HEK293 (cell line): ENCODE measurements at regions of chr11 and their contacts with region 1.

Region 1: DNA sequence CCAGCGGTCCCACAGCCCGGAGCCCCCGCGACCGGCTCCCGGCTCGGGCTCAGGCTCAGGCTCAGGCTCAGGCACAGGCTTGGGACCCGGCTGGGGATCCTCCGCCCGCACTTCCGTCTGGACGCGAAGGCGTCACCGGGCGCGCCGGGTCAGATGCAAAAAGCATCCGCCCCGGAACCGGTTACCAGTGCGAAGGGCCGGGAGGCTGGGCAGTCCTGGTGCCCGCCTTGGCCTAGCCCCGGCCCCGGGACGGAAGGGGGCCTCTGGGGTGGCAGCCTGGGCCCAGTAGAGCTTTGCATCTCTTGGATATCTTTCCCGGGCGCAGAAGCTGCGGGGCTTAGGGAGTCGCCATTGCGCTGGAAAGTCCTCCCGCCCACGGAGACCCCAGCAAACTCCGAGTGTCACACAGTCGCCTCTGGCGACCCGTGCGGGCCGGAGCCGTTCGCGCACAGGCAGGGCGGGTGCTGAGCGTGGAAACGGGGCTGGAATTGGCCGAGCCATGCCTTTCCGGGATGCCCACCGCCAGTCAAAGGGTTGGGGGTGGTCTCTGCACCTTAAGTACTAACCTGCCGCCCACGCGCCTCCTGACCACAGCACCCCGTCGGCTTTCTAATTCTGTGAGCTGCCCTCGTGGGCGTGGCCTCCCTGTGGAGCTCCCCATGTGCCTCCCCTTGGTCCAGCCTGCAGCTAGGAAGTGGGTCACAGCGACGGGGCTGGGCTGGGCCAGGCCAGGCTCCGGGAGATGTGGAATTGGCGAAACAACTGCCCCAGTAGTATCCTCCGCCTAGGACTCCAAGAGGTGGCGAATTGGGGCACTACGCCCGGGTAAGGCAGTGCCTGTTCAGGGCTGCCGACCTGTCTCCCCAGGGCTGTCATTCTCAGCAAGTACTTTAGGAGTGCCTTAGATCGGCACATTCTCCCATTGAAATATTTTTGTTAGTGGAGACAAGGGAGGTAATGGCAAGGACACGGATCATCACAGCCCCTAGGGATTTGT is at the start of gene TMEM9B:
- H3K4me3 ChIP-seq: peak within 1 kb of the TSS; percentile 89
- H3K27ac ChIP-seq: peak within 1 kb of the TSS; percentile 77
- H3K4me1 ChIP-seq: no peaks in the 10 kb centered on the region
- CTCF ChIP-seq: no peak

Region 2: GRCh38 chr11:8911029-8911826 is 53.4 kb before region 1 on chr11 and contains the start of gene AKIP1:
- CTCF ChIA-PET with region 1: interaction called, 96 read pairs
- POLR2A ChIA-PET with region 1: interaction called, 12 read pairs
- H3K4me3 ChIP-seq: peak within 1 kb of the TSS; percentile 85
- H3K27ac ChIP-seq: peak within 1 kb of the TSS; percentile 86
- H3K4me1 ChIP-seq: no peaks in the 10 kb centered on the region
- CTCF ChIP-seq: peak; percentile 7; the same call in 1 of the 2 replicates

Region 3: GRCh38 chr11:8922691-8923090 is 41.9 kb before region 1 on chr11:
- CTCF ChIA-PET with region 1: interaction called, 21 read pairs
- POLR2A ChIA-PET with region 1: no interaction called
- H3K4me3 ChIP-seq: no peak overlapping the region
- H3K27ac ChIP-seq: no peak overlapping the region
- H3K4me1 ChIP-seq: no peaks in the 10 kb centered on the region
- CTCF ChIP-seq: no peak

Region 4: DNA sequence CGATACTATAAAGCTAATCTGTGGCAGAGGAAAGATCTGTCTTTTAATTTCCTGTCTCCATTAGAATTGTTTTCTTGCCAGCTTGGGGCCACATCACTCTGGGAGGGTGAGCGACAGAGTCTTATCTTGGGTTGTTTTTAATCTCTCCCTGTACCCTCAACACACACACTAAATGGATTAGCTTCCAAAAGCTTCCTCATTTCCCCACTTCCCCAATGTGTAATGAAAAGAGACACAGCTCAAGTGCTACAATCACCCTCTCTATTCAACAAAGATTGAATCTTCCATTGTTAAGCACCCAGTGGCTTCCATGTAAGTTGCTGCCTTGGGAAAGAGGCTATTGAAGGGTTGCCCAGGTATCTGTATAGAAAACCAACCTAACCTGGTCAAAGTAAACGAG is 15.7 kb before region 1 on chr11:
- CTCF ChIA-PET with region 1: interaction called, 15 read pairs
- POLR2A ChIA-PET with region 1: interaction called, 3 read pairs
- H3K4me3 ChIP-seq: no peak overlapping the region
- H3K27ac ChIP-seq: no peak overlapping the region
- H3K4me1 ChIP-seq: no peaks in the 10 kb centered on the region
- CTCF ChIP-seq: no peak

Region 5: DNA sequence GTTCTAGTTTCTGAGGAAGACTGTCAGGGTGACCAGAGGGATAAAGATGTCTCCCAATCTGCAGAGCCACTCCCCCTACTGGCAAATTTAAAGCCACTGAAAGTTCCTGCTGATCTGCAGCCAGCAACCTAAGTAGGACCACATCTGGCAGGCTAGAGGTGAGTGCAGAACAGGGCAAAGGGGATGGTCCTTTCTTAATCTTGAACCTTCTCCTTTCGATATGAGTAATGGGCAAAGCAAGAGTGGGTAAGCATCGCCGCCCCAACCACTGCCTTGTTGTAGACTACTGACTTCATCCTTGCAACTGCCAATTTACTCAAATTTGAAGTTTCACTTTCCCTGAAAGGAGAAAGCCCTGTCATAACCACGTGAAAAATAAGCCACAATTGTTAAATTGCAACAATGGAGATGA is 96.1 kb after region 1 on chr11:
- CTCF ChIA-PET with region 1: no interaction called
- POLR2A ChIA-PET with region 1: no interaction called
- H3K4me3 ChIP-seq: no peak overlapping the region
- H3K27ac ChIP-seq: no peak overlapping the region
- H3K4me1 ChIP-seq: no peaks in the 10 kb centered on the region
- CTCF ChIP-seq: no peak

Region 6: DNA sequence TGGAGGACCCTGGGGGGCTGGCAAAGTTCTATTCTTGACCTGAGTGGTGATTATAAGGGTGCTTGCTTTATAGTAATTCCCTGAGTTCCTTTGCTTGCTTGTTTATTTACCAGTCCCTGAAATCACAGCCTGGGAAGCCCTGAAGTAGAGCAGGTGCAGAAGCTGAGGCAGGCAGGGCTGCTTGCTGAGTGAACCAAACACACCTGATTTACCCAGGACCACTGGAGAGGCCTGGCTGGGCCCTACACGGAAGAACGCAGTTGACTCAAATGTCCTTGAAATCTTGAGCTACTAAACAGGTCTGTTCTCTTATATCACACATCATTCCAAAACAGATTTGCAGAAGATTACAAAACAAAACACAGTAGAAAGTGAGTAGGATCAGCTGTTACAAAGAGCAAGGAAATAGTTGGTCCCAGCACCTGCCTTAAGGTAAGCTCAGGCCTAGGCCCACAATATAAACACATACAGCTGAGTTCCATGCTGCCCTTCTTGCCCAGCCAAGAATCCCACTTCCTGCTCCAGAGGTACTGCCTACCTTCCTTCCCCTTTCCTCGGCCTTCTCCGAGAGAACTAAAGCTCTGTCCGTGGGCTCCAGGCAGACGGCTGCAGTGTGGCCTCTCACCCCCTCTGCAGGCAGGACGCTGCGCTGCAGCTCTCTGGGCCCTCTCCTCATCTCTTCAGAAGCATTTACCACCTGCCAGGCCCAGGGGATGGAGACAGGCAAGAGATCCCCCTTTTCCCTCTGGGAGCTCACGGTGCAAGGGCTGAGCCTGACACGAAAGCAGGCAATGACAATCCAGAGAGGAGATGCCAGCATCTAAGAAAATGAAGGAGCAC is 172.9 kb after region 1 on chr11:
- CTCF ChIA-PET with region 1: interaction called, 14 read pairs
- POLR2A ChIA-PET with region 1: interaction called, 6 read pairs
- H3K4me3 ChIP-seq: no peak overlapping the region
- H3K27ac ChIP-seq: no peak overlapping the region
- H3K4me1 ChIP-seq: peaks cover 15% of the 10 kb centered on the region
- CTCF ChIP-seq: peak; percentile 64

Region 7: GRCh38 chr11:9315037-9315688 is 350.5 kb after region 1 on chr11:
- CTCF ChIA-PET with region 1: no interaction called
- POLR2A ChIA-PET with region 1: no interaction called
- H3K4me3 ChIP-seq: peak overlapping the region; percentile 55
- H3K27ac ChIP-seq: peak overlapping the region; percentile 32
- H3K4me1 ChIP-seq: no peaks in the 10 kb centered on the region
- CTCF ChIP-seq: no peak